ENCODE measurements at regions of chr15 and their contacts with region 1.

Region 1: GRCh38 chr15:68252925-68253534 is 23.5 kb upstream of the CLN6 start:
- DNase-seq: no peak
- H3K4me3 ChIP-seq: no peak overlapping the region
- H3K27ac ChIP-seq: no peak overlapping the region
- H3K4me1 ChIP-seq: peaks cover 0 to 8% (median 6%) of the 10 kb centered on the region in 4 experiments; a peak in 4 of 7 replicates
- H3K27me3 ChIP-seq: no peaks in the 10 kb centered on the region
- CTCF ChIP-seq: peak in 2 of 3 experiments; percentile 72 to 83; a peak in 3 of 4 replicates
- EP300 ChIP-seq: no peak
- POLR2A ChIP-seq: no peak
- RAD21 ChIP-seq: peak; percentile 91 to 93

Region 2: GRCh38 chr15:68241088-68241935 is 11.7 kb before region 1 on chr15:
- CTCF ChIA-PET with region 1: interaction called, 14 read pairs
- POLR2A ChIA-PET with region 1: interaction called, 3 read pairs
- DNase-seq: peak in 1 of 2 experiments; percentile 32
- H3K4me3 ChIP-seq: no peak overlapping the region
- H3K27ac ChIP-seq: no peak overlapping the region
- H3K4me1 ChIP-seq: peaks cover 0 to 5% (median 0%) of the 10 kb centered on the region in 4 experiments; a peak in 1 of 7 replicates
- H3K27me3 ChIP-seq: no peaks in the 10 kb centered on the region
- CTCF ChIP-seq: no peak
- EP300 ChIP-seq: no peak
- POLR2A ChIP-seq: no peak
- RAD21 ChIP-seq: no peak

Region 3: DNA sequence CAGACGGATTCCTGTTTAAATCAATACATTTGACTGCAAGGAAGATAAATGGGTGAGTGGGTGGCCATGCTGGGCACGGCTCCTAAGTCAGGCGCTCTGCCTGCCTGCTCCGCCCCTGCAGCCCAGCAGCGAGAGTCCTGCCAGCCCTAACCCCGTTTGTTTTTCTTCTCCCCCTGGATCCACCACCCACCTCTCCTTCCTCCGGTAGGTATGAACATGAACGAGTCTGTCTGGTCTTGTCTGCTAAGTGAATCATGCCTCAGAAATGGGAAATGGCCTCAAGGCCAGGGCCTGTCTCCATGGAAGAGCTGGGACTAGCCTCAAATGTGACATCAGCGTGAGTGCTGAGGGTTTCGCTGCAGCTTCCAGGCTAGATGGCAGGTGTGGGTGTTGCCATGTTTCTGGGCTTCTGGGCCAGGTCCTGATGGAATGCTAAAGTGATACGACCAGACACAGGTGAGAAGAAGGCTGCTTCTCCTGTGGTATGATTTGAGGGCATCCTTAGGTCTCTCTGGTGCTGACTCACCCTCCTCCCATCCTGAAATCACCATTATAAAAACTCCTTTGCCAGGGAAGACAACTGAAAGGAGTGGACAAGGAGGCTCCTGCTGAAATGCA is 18.9 kb after region 1 on chr15:
- CTCF ChIA-PET with region 1: interaction called, 72 read pairs
- POLR2A ChIA-PET with region 1: interaction called, 32 read pairs
- DNase-seq: no peak
- H3K4me3 ChIP-seq: no peak overlapping the region
- H3K27ac ChIP-seq: no peak overlapping the region; the same call in 1 of the 2 replicates
- H3K4me1 ChIP-seq: peaks cover 7 to 20% (median 13%) of the 10 kb centered on the region in 4 experiments
- H3K27me3 ChIP-seq: no peaks in the 10 kb centered on the region
- CTCF ChIP-seq: no peak
- EP300 ChIP-seq: no peak
- POLR2A ChIP-seq: no peak
- RAD21 ChIP-seq: no peak

Region 4: GRCh38 chr15:68608206-68608843 is 355.3 kb after region 1 on chr15:
- CTCF ChIA-PET with region 1: no interaction called
- POLR2A ChIA-PET with region 1: no interaction called
- DNase-seq: no peak
- H3K4me3 ChIP-seq: no peak overlapping the region
- H3K27ac ChIP-seq: no peak overlapping the region
- H3K4me1 ChIP-seq: peaks cover 6 to 21% (median 11%) of the 10 kb centered on the region in 4 experiments; a peak in 6 of 7 replicates
- H3K27me3 ChIP-seq: no peaks in the 10 kb centered on the region; a peak in 2 of 7 replicates
- CTCF ChIP-seq: no peak
- EP300 ChIP-seq: no peak
- POLR2A ChIP-seq: no peak
- RAD21 ChIP-seq: no peak